Activated T-helper 1 cell treated with anti-CD3 and anti-CD28 coated beads, Interleukin-12 subunit alpha, Interleukin-12 subunit beta, Interleukin-2, Interleukin-4 antibody, amounts not matched to agents 30 ng/mL and 10 ng/mL and 1 ng/mL, durations not matched to agents 14 hours and 24 hours and 36 hours (primary cell): ENCODE measurements at regions of chr4 and their contacts with region 1.

Region 1: GRCh38 chr4:87220094-87220822 is at the start of gene KLHL8:
- DNase-seq: peak; percentile 89
- H3K4me3 Mint-ChIP-seq: peak within 1 kb of the TSS; percentile 89
- H3K27ac Mint-ChIP-seq: peak within 1 kb of the TSS; percentile 88
- H3K4me1 Mint-ChIP-seq: peaks cover 18% of the 10 kb centered on the region
- H3K27me3 Mint-ChIP-seq: peaks cover 19% of the 10 kb centered on the region
- total RNA-seq, gene KLHL8: 15.1 and 17.6 TPM in 2 replicates

Region 2: GRCh38 chr4:87058356-87059073 is 161.7 kb before region 1 on chr4:
- intact Hi-C with region 1: loop called (anchors 5 kb)
- DNase-seq: no peak
- H3K4me3 Mint-ChIP-seq: peak overlapping the region; percentile 3
- H3K27ac Mint-ChIP-seq: peak overlapping the region; percentile 82
- H3K4me1 Mint-ChIP-seq: peaks cover 65% of the 10 kb centered on the region
- H3K27me3 Mint-ChIP-seq: no peaks in the 10 kb centered on the region

Region 3: DNA sequence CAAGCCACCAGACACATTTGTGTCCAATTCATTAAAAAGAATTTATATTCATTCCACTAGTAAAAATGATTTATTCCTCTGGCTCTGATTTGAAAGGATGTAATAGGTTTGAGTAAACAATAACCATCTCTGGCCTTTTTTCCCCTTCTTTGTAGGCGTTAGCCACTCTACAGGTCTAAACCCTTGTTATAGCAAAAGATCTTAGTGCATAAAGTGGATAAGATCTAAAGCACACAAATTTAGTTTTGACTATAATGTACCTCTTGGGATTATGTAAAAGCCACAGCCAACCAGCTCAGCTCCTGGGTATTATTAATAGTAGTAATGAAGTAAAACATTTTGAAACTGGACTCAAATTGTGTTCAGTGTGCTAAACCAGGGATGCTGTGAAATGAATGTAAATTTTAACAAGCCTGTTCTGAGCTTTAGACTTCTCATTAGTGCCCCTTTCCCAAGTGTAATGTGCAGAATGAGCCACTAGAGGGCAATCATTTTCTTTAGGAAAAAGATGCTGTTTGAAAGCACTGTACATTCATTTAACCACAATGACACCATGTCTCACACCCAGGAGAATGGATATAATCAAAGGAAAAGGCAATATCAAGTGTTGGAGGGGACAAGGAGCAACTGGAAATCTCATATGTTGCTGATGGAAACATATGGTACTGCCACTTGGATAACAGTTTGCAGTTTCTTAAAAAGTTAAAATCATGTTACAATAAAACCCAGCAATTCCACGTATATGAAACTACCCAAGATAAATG is 69.6 kb before region 1 on chr4:
- intact Hi-C with region 1: loop called (anchors 1 kb)
- DNase-seq: peak; percentile 37
- H3K4me3 Mint-ChIP-seq: no peak overlapping the region
- H3K27ac Mint-ChIP-seq: no peak overlapping the region
- H3K4me1 Mint-ChIP-seq: peaks cover 7% of the 10 kb centered on the region
- H3K27me3 Mint-ChIP-seq: no peaks in the 10 kb centered on the region

Region 4: DNA sequence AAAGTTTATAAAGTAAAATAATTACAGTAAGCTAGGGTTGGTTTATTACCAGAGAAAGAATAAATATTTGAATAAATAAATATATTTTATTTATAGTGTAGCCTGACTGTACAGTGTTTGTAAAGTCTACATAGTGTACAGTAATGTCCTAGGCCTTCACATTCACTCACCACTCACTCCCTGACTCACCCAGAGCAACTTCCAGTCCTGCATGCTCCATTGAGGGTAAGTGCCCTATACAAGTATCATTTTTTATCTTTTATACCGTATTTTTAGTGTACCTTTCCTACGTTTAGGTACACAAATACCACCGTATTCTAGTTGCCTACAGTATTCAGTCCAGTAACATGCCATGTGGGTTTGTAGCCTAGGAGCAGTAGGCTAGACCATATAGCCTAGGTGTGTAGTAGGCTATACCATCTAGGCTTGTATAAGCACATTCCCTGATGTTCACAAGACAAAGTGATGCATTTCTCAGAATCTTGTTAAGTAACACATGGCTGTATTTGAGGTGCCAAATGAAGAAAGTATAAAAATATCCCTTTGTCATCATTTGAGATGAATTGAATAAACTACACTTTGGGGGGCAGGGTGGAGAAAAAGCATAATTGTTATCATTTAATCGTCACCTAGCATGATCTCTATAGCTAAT is 14.9 kb after region 1 on chr4:
- intact Hi-C with region 1: loop called (anchors 1 kb)
- DNase-seq: no peak
- H3K4me3 Mint-ChIP-seq: no peak overlapping the region
- H3K27ac Mint-ChIP-seq: no peak overlapping the region
- H3K4me1 Mint-ChIP-seq: peaks cover 7% of the 10 kb centered on the region
- H3K27me3 Mint-ChIP-seq: peaks cover 14% of the 10 kb centered on the region

Region 5: DNA sequence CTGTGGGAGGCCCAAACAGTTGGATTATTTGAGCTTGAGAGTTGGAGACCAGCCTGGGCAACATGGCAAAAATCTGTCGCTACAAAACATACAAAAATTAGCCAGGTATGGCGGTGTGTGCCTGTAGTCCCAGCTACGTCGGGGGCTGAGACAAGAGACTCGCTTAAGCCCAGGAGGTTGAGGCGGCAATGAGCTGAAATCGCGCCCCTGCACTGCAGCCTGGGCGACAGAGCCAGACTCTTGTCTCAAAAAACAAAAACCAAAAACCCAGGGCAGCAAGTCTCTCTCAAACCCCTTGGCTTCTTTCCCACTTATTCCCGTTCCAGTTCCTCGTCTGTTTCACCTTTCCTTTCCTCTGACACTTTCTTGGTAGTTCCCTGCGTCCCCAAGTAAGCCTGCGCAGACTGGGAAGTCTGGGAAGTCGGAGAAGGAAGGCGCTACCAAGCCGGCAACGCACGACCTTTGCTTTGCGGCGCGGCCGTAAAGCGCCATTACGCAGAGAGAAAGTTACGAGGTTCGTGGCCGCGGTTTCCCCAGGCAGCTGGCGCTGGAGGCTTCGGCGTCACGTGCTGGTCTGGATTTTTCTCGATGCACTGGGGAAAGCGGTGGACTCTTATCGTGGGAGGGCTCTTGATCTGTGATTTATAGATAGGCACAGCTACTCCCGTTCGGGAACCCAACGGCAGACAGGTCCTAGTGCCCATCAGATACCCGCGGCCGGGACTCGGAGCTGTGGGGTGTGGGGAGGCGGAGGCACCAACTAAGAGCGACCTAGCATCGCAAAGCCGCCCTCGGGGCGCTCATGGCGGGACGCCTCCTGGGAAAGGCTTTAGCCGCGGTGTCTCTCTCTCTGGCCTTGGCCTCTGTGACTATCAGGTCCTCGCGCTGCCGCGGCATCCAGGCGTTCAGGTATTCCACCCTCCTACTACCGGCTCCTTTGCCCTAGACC is 202.1 kb after region 1 on chr4 and contains the start of gene NUDT9:
- intact Hi-C with region 1: loop called (anchors 5 kb)
- DNase-seq: peak; percentile 79
- H3K4me3 Mint-ChIP-seq: peak within 1 kb of the TSS; percentile 99
- H3K27ac Mint-ChIP-seq: peak within 1 kb of the TSS; percentile 95
- H3K4me1 Mint-ChIP-seq: peaks cover 30% of the 10 kb centered on the region
- H3K27me3 Mint-ChIP-seq: peaks cover 5% of the 10 kb centered on the region
- total RNA-seq, gene NUDT9: 13.9 and 14.6 TPM in 2 replicates